MCF 10A (cell line): ENCODE measurements at regions of chr20 and their contacts with region 1.

Region 1: DNA sequence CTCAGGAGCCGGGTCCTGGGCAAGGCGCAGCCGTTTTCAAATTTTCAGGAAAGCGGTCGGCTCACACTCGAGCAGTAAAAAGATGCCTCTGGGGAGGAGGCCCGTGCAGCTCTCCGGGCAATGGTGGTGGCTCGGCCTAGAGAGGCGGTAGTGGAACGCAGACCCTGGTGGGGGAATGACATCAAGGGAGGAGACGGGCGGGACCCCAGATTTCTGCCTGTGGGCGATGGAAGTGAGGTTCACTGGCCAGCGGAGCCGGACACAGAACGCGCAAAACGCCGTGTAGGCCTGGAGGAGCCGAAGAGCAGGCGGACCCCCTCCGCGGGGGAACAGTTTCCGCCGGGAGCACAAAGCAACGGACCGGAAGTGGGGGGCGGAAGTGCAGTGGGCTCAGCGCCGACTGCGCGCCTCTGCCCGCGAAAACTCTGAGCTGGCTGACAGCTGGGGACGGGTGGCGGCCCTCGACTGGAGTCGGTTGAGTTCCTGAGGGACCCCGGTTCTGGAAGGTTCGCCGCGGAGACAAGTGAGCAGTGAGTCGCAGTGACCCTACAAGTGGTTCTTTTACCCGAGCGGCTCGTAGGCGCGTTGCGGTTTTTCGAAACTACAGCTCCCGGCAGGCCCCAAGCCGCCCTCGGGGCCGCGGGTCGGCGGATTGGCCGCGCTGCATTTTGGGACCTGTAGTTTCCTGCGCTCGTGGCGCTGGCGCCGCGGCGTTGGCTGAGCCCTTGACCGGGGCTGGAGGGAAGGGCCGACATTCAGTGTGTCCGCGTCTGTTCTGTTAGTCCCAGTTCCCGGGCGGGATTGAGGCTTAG is at the start of gene RTEL1:
- DNase-seq: peak; percentile 88
- H3K4me3 Mint-ChIP-seq: peak within 1 kb of the TSS; percentile 88
- H3K27ac Mint-ChIP-seq: peak within 1 kb of the TSS; percentile 97
- H3K4me1 Mint-ChIP-seq: peaks cover 9% of the 10 kb centered on the region
- H3K27me3 Mint-ChIP-seq: no peaks in the 10 kb centered on the region
- CTCF ChIP-seq: no peak
- total RNA-seq, gene RTEL1: 27.9 and 39.2 TPM in 2 replicates

Region 2: DNA sequence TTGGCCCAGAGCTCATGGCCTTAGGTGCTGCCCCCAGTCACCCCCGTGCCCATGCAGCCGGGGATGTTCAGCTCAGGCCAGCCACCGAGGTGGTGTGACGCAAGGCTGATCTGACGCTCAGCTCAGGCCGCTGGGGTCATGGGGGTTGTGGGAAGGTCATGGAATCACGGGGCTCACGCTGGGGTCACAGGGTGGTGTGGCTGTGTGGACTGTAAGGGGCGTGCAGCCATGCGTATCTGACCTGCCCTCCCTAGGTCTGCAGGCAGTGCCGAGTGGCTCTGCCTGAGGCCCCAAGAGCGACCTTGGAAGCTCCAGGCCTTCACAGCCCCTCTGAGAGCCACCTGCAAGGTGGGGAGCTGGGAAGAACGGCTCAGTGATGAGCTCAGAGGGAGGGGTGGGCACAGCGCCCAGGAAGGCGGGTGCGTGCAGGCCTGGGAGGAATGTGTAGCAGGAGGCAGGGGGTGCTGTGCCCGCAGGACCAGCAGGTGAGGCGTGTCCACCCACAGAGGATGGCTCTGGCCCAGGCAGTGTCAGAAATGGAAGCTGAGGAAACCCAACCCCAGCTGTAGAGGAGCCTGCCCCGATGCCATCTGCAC is 324.8 kb before region 1 on chr20:
- CTCF ChIA-PET with region 1: no interaction called
- POLR2A ChIA-PET with region 1: no interaction called
- intact Hi-C with region 1: no loop called
- DNase-seq: no peak
- H3K4me3 Mint-ChIP-seq: no peak overlapping the region
- H3K27ac Mint-ChIP-seq: no peak overlapping the region
- H3K4me1 Mint-ChIP-seq: no peaks in the 10 kb centered on the region
- H3K27me3 Mint-ChIP-seq: peaks cover 31% of the 10 kb centered on the region
- CTCF ChIP-seq: no peak

Region 3: DNA sequence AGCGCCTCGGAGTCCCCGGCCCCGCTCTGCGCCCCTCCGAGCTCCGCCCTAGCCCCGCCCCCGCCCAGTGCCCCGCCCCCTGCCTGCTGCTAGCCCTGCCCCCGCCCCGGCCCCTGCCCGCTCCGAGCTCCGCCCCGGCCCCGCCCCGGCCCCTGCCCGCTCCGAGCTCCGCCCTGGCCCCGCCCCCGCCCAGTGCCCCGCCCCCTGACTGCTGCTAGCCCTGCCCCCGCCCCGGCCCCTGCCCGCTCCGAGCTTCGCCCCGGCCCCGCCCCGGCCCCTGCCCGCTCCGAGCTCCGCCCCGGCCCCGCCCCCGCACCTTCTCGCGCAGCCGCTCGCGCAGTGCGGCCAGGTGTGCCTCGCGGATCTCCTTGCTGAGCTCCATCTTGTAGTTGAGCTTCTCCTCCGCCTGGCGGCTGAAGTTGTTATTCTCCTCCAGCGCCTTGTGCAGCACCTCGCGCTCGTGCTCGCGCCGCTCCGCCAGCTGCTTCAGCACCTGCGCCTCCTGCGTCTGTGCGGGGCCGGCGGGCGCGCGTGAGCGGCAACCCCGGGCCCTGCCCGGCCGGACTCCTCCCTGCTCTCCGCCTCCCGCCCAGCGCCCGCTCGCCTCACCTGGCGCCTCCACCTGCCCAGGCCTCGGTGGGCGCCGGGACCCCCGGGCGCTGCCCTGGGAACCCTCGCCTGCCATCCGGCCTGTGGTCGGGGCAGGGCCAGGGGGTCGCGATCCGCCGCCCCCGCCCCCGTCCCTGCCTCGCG is 16.2 kb before region 1 on chr20:
- CTCF ChIA-PET with region 1: interaction called, 3 read pairs
- POLR2A ChIA-PET with region 1: interaction called, 33 read pairs
- intact Hi-C with region 1: no loop called
- DNase-seq: peak; percentile 82
- H3K4me3 Mint-ChIP-seq: peak overlapping the region; percentile 74
- H3K27ac Mint-ChIP-seq: no peak overlapping the region
- H3K4me1 Mint-ChIP-seq: peaks cover 6% of the 10 kb centered on the region
- H3K27me3 Mint-ChIP-seq: no peaks in the 10 kb centered on the region
- CTCF ChIP-seq: peak; percentile 39

Region 4: DNA sequence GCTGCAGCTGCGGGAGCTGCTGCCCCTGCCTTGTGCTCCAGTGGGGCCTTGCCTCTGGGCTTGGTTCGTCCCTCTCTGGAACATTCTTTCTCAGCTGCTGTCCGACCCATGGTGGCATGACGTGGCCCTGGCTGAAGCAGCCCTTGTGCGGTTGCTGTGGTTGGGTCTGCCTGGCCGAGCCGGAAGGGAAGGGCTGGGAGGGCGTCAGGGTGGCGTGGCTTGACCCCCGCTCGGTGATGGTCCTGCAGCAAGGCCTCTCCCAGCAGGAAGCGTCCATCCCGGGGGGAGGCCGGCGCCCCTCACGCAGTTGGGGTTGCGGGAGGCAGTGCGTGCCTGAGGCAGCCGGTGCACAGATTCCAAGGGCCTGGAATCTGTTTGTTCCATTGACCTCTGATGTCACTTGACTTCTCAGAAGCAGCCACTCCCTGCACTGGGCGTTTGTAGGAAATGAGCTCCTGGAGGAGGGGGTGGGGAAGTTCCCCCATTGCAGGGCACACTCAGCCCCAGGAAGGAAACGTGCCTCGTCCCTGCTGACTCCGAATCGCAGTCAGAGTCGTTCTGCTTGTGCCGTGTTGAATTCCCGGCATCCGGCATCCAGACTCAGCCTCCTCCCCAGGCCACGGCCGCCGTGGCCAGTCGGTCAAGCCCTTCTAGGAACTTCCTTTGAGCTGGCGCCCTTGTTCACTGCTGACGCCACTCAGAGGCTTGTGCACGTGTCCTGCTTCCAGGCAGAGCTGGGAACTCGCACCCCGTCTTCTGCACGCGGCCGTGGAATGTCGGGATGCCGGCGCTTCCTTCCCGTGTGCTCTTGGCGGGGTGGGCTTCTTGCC is 28.6 kb after region 1 on chr20:
- CTCF ChIA-PET with region 1: no interaction called
- POLR2A ChIA-PET with region 1: interaction called, 48 read pairs
- intact Hi-C with region 1: no loop called
- DNase-seq: peak; percentile 85
- H3K4me3 Mint-ChIP-seq: no peak overlapping the region
- H3K27ac Mint-ChIP-seq: no peak overlapping the region
- H3K4me1 Mint-ChIP-seq: peaks cover 12% of the 10 kb centered on the region
- H3K27me3 Mint-ChIP-seq: no peaks in the 10 kb centered on the region
- CTCF ChIP-seq: no peak

Region 5: GRCh38 chr20:63955827-63956663 is 297.9 kb after region 1 on chr20 and contains the start of gene UCKL1:
- CTCF ChIA-PET with region 1: no interaction called
- POLR2A ChIA-PET with region 1: interaction called, 12 read pairs
- intact Hi-C with region 1: no loop called
- DNase-seq: peak; percentile 81
- H3K4me3 Mint-ChIP-seq: peak within 1 kb of the TSS; percentile 74
- H3K27ac Mint-ChIP-seq: no peak within 1 kb of the TSS
- H3K4me1 Mint-ChIP-seq: peaks cover 21% of the 10 kb centered on the region
- H3K27me3 Mint-ChIP-seq: no peaks in the 10 kb centered on the region
- CTCF ChIP-seq: no peak
- total RNA-seq, gene UCKL1: 38.6 and 43.7 TPM in 2 replicates